AG04449 (cell line): ENCODE measurements at regions of chr15 and their contacts with region 1.

Region 1: GRCh38 chr15:31488426-31489204 is 162.0 kb downstream of the KLF13 start:
- DNase-seq: peak; percentile 61
- H3K4me3 ChIP-seq: no peak overlapping the region
- CTCF ChIP-seq: peak; percentile 74

Region 2: DNA sequence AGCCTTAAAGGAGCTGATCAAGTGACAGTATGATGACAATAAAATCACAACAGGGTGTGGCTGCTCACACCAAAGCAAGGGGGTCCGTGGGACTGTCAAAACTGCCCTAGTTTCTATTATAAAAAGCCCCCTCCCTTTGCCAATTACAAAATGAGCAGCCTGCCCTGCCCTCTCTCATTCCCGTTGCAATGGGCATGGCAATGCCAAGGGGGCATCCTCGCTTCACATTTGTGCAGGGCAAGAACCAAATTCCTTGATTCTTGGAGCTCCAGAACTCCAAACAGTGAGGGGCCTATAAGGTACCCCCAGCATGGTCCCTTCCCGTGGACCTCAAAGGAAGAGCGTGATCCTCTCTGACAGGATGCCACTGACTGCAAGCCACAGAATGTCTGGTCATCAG is 282.2 kb before region 1 on chr15:
- CTCF ChIA-PET with region 1: interaction called, 104 read pairs
- POLR2A ChIA-PET with region 1: no interaction called
- DNase-seq: no peak
- H3K4me3 ChIP-seq: no peak overlapping the region
- CTCF ChIP-seq: no peak

Region 3: GRCh38 chr15:31254431-31255175 is 234.0 kb before region 1 on chr15:
- CTCF ChIA-PET with region 1: interaction called, 17 read pairs
- POLR2A ChIA-PET with region 1: no interaction called
- DNase-seq: peak; percentile 79
- H3K4me3 ChIP-seq: no peak overlapping the region
- CTCF ChIP-seq: no peak

Region 4: GRCh38 chr15:31352911-31353811 is 135.5 kb before region 1 on chr15:
- CTCF ChIA-PET with region 1: interaction called, 55 read pairs
- POLR2A ChIA-PET with region 1: interaction called, 3 read pairs
- DNase-seq: peak; percentile 67
- H3K4me3 ChIP-seq: peak overlapping the region; percentile 3
- CTCF ChIP-seq: no peak

Region 5: DNA sequence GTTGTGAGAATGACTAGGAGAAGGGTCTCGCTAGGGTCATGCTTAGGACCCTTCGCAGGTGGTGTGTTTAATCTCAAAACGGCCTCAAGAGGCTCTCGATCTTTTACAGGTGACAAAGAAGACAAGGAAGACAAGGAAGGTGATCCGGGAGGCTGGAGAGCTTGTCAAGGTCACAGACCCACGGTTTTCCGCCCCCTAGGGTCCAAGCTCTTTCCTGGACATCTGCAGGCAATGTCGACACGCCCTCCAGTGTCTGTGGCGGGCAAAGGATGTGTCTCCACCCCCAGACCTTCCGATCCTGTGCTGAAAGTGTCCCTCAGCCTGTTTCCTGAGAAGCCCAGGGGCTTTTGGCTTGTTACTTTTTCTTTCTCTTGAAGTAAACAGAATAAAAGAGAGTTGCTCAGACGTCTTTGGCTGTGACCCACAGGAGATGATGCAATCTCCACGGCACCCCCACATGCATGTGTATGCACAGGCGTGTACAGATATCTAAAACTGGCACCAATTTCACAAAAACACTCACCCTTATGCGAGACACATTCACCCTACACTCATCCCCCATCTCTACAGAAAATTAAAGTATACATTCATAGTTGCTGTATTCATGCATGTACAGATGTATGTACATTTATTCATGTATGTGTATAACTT is 53.2 kb before region 1 on chr15:
- CTCF ChIA-PET with region 1: interaction called, 168 read pairs
- POLR2A ChIA-PET with region 1: no interaction called
- DNase-seq: no peak
- H3K4me3 ChIP-seq: no peak overlapping the region
- CTCF ChIP-seq: peak; percentile 80

Region 6: GRCh38 chr15:31499953-31500765 is 11.5 kb after region 1 on chr15:
- CTCF ChIA-PET with region 1: interaction called, 71 read pairs
- POLR2A ChIA-PET with region 1: no interaction called
- DNase-seq: no peak
- H3K4me3 ChIP-seq: no peak overlapping the region
- CTCF ChIP-seq: no peak